ENCODE measurements at regions of chr1 and their contacts with region 1.

Region 1: GRCh38 chr1:175742790-175743459 is 470 bp downstream of the TNR start:
- DNase-seq: no peak
- H3K4me3 ChIP-seq: no peak overlapping the region
- H3K27ac ChIP-seq: no peak overlapping the region
- H3K4me1 ChIP-seq: no peaks in the 10 kb centered on the region
- CTCF ChIP-seq: no peak

Region 2: GRCh38 chr1:176073524-176074157 is 330.7 kb after region 1 on chr1:
- CTCF ChIA-PET with region 1: no interaction called
- POLR2A ChIA-PET with region 1: no interaction called
- intact Hi-C with region 1: loop called (anchors 5 kb)
- DNase-seq: peak; percentile 77
- H3K4me3 ChIP-seq: no peak overlapping the region
- H3K27ac ChIP-seq: no peak overlapping the region
- H3K4me1 ChIP-seq: no peaks in the 10 kb centered on the region
- CTCF ChIP-seq: peak; percentile 90